ENCODE measurements at regions of chr22 and their contacts with region 1.

Region 1: DNA sequence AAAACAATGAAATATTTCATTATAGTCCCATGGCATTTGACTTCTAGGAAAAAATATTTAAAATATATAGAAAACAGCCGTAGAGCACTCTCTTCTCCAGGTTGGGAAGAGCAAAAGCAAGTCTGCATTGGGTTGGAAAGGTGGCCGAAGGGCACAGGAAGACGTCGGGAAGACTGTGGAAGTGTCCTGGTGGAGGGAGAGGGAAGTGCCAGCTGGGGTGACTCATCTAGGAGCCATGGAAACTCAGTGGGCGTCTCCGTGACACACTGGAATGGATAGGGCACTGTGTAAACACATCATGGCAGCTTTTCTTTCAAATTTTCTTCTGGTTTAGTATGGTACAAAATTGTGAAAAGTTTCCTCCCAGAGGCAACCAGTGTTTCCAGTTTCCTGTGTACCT is 12.7 kb downstream of the GTPBP1 start:
- DNase-seq: no peak
- H3K4me3 ChIP-seq: no peak overlapping the region
- H3K27me3 ChIP-seq: no peaks in the 10 kb centered on the region
- CTCF ChIP-seq: peak; percentile 76

Region 2: DNA sequence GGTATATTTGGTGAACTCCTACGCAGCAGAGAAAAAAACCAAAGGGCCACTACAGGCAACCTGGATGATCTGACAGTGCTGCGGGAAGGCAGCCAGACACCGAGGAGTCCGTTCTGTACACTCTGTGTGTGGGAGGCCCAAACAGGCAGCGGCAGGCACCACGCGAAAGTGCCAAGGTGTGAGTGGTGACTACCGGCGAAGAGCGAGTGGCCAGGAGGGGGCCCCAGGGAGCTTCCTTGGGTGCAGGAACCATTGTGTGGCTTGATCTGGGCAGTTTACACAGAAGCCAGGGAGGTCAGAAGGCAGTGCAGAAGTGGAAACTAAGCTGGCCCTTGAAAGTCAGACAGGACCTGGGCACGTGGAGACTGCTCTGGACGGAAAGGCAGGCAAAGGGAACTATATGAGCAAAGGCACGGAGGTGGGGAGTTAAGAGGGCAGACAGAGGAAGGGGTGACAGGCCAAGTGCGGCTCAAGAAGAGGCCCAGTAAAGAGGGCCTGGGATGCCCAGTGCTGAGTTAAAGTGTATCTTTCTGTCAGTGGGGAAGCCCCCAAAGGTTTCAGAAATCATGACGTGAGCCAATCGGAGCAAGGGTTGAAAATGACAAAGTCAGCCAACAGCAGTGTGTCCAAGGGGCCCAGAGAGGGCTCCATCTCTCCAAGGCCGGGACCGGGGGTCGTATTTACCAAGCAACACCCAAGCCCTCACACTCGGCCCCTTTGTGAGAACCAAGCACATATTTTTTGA is 456.2 kb before region 1 on chr22:
- CTCF ChIA-PET with region 1: no interaction called
- POLR2A ChIA-PET with region 1: no interaction called
- DNase-seq: no peak
- H3K4me3 ChIP-seq: no peak overlapping the region
- H3K27me3 ChIP-seq: no peaks in the 10 kb centered on the region
- CTCF ChIP-seq: peak; percentile 43

Region 3: GRCh38 chr22:38705235-38706100 is 12.9 kb before region 1 on chr22 and contains the start of gene GTPBP1:
- CTCF ChIA-PET with region 1: interaction called, 21 read pairs
- POLR2A ChIA-PET with region 1: no interaction called
- DNase-seq: peak; percentile 100
- H3K4me3 ChIP-seq: peak within 1 kb of the TSS; percentile 92
- H3K27me3 ChIP-seq: no peaks in the 10 kb centered on the region
- CTCF ChIP-seq: peak; percentile 16; the same call in 1 of the 2 replicates
- polyA plus RNA-seq, gene GTPBP1: 24.0 and 31.1 TPM in 2 replicates

Region 4: GRCh38 chr22:38733329-38733723 is 14.9 kb after region 1 on chr22:
- CTCF ChIA-PET with region 1: interaction called, 17 read pairs
- POLR2A ChIA-PET with region 1: no interaction called
- DNase-seq: no peak
- H3K4me3 ChIP-seq: no peak overlapping the region
- H3K27me3 ChIP-seq: no peaks in the 10 kb centered on the region
- CTCF ChIP-seq: peak; percentile 77